Activated CD4-positive, alpha-beta memory T cell treated with anti-CD3 and anti-CD28 coated beads for 36 hours (primary cell): ENCODE measurements at regions of chr9 and their contacts with region 1.

Region 1: DNA sequence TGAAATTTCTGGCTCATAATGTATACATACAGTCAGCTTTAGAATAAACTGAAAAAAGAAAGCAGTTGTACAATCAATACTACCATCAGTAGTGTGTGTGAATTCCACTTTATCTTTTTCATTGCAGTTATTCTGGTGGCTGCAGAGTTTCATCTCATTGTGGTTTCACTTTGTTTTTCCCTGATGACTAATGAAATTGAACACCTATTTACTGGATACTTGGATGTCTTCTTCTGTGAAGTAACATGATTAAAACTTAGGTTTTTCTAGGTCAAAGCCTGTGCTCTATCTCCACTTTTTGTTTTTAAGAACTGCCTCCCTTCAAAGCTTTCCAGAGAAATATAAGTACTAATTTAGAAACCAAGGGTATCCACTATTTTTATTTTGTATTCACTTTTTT is 174.3 kb downstream of the TRPM3 start:
- DNase-seq: no peak
- H3K4me3 Mint-ChIP-seq: no peak overlapping the region
- H3K27ac Mint-ChIP-seq: no peak overlapping the region
- H3K4me1 Mint-ChIP-seq: no peaks in the 10 kb centered on the region
- H3K27me3 Mint-ChIP-seq: peaks cover 2% of the 10 kb centered on the region

Region 2: GRCh38 chr9:70932097-70932496 is 15.0 kb before region 1 on chr9:
- CTCF ChIA-PET with region 1: no interaction called
- POLR2A ChIA-PET with region 1: no interaction called
- intact Hi-C with region 1: loop called (anchors 1 kb)
- DNase-seq: no peak
- H3K4me3 Mint-ChIP-seq: no peak overlapping the region
- H3K27ac Mint-ChIP-seq: no peak overlapping the region
- H3K4me1 Mint-ChIP-seq: no peaks in the 10 kb centered on the region
- H3K27me3 Mint-ChIP-seq: no peaks in the 10 kb centered on the region

Region 3: DNA sequence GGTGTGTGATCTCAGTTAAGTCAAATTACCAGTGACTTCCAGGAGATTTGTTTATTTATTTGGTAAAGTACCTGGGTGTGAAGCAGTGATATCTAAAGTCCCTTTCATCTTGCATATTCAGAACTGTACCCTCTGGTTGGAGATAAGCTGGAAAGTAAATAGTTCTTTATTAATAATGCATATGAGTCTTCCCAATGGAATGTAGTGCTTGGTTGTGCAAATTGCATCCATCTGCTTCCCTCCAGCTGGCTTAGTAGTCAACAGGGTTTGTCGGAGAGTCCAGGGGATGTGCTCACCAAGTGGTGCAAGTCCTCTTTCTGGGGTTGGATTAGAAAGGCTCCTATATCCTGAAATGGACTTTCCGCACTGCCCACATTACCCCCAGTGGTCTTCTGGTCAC is 132.4 kb after region 1 on chr9:
- CTCF ChIA-PET with region 1: no interaction called
- POLR2A ChIA-PET with region 1: no interaction called
- intact Hi-C with region 1: no loop called
- DNase-seq: no peak
- H3K4me3 Mint-ChIP-seq: no peak overlapping the region
- H3K27ac Mint-ChIP-seq: no peak overlapping the region
- H3K4me1 Mint-ChIP-seq: no peaks in the 10 kb centered on the region
- H3K27me3 Mint-ChIP-seq: no peaks in the 10 kb centered on the region